ENCODE measurements at regions of chr18 and their contacts with region 1.

Region 1: DNA sequence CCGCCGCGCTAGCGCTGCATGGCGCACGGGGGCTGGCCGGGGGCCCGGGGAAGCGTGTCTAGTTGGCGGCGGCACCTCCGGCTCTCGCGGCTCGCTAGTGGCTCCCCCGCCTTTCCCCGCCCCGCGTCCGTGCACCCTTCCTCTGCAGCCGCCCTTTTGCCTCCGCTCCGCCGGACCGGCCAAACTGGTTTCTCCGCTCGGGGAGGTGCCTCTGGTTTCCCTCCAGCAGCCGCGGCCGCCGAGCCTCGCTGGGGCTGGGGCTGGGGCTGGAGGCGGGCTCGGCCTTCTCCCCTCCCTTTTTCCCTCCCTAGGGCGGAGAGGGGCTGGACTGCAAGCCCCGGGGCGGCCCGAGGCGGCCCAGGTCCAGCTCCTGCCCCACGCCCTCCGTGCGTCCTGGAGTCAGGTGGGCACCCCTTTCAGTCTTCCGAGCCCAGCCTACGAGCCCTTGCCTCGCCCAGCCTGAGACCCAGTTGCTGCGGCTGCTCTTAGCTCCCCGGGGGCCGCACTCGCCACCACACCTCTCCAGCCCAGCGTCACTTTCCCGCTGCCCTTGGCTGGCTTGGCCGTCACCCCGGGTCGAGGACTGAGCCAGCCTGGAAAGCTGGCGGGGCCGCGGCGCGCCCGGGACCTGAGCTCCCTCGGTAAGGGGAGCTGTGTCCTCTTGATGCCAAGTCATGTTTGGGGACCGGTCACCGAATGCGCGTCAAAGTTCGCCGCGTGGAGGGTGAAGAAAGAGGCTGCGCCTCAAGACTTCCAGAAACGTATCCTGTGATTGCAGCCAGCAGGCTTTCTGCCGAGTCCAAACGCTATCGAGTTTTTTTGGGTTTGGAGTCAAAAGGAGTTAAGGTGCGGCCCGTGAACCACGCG is at the start of gene ATP8B1:
- DNase-seq: peak; percentile 88
- ATAC-seq: peak; percentile 93
- total RNA-seq, gene ATP8B1: 5.0 TPM

Region 2: GRCh38 chr18:57630002-57630753 is 173.2 kb before region 1 on chr18:
- intact Hi-C with region 1: loop called (anchors 1 kb)
- DNase-seq: peak; percentile 99
- ATAC-seq: peak; percentile 99

Region 3: GRCh38 chr18:57666818-57667497 is 136.4 kb before region 1 on chr18:
- intact Hi-C with region 1: loop called (anchors 10 kb)
- DNase-seq: no peak
- ATAC-seq: peak; percentile 85

Region 4: DNA sequence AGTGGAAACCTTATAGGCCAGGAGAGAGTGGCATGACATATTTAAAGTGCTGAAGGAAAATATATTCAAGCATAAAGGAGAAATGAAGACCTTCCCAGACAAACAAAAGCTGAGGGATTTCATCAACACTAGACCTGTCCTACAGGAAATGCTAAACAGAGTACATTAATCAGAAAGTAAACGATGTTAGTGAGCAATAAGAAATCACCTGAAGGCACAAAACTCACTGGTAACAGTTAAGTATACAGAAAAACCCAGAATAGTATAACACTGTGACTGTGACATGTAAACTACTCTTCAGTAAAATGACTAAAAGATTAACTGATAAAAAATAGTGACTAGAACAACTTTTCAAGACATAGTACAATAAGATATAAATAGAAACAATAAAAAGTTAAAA is 87.7 kb before region 1 on chr18:
- intact Hi-C with region 1: loop called (anchors 10 kb)
- DNase-seq: no peak
- ATAC-seq: no peak

Measured in Right ventricle myocardium inferior (tissue), 1 donor.